ENCODE measurements at regions of chr3 and their contacts with region 1.

Region 1: GRCh38 chr3:111539351-111540331 is 2.4 kb upstream of the CD96 start:
- DNase-seq: peak; percentile 73
- H3K4me3 Mint-ChIP-seq: peak overlapping the region; percentile 53
- H3K27ac Mint-ChIP-seq: peak overlapping the region; percentile 79
- H3K4me1 Mint-ChIP-seq: peaks cover 63% of the 10 kb centered on the region
- H3K27me3 Mint-ChIP-seq: no peaks in the 10 kb centered on the region

Region 2: GRCh38 chr3:109731620-109732473 is 1807.8 kb before region 1 on chr3:
- CTCF ChIA-PET with region 1: no interaction called
- intact Hi-C with region 1: loop called (anchors 1 kb)
- DNase-seq: peak; percentile 77
- H3K4me3 Mint-ChIP-seq: no peak overlapping the region
- H3K27ac Mint-ChIP-seq: no peak overlapping the region
- H3K4me1 Mint-ChIP-seq: peaks cover 3% of the 10 kb centered on the region
- H3K27me3 Mint-ChIP-seq: no peaks in the 10 kb centered on the region

Region 3: GRCh38 chr3:111012388-111013248 is 527.0 kb before region 1 on chr3:
- CTCF ChIA-PET with region 1: no interaction called
- intact Hi-C with region 1: loop called (anchors 2 kb)
- DNase-seq: peak; percentile 27
- H3K4me3 Mint-ChIP-seq: no peak overlapping the region
- H3K27ac Mint-ChIP-seq: no peak overlapping the region
- H3K4me1 Mint-ChIP-seq: no peaks in the 10 kb centered on the region
- H3K27me3 Mint-ChIP-seq: peaks cover 2% of the 10 kb centered on the region

Region 4: DNA sequence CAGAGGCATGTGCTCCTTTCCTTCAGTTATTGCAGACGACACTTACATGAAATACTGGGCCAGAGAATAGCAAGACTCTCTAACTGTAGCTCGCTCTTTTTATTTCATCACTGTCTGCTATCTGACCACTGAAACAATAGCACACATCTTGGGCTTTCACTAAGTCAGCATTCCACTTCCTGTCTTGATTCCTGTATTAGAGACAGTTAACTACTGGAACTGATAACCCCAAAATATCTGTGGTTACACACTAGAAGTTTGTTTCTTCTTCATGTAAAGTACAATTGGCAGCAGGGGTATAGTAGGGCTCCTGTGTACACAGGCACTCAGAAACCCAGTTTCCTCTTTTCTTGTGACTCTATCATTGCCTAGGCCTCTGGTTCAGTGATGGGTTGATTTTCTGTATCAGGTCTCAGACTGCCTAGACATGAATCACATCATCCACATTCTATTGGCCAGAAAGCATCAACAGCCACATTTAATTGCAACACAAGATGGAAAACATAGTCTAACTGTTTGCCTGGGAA is 227.9 kb before region 1 on chr3:
- CTCF ChIA-PET with region 1: interaction called, 4 read pairs
- intact Hi-C with region 1: loop called (anchors 1 kb)
- DNase-seq: no peak
- H3K4me3 Mint-ChIP-seq: no peak overlapping the region
- H3K27ac Mint-ChIP-seq: peak overlapping the region; percentile 37
- H3K4me1 Mint-ChIP-seq: peaks cover 33% of the 10 kb centered on the region
- H3K27me3 Mint-ChIP-seq: no peaks in the 10 kb centered on the region

Region 5: DNA sequence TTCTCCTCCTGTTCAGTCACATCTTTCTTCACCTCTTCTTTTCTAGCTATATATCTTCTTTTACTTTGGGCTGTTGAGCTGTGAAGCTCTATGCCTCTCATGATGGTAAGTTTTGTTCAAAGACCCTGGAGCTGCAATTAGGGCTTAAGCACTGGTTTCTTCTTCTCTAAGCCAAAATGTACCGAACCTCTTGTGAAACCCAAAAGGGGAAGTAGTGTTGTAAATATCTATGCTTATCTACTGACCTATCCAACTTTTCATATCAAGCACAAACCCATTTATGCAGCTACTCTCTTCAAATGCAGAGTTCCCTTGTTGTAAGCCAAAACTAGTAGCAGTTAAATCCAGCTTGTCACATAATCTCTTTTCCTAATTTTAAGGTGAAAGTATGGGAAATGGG is 121.2 kb before region 1 on chr3:
- CTCF ChIA-PET with region 1: no interaction called
- intact Hi-C with region 1: no loop called
- DNase-seq: no peak
- H3K4me3 Mint-ChIP-seq: no peak overlapping the region
- H3K27ac Mint-ChIP-seq: no peak overlapping the region
- H3K4me1 Mint-ChIP-seq: no peaks in the 10 kb centered on the region
- H3K27me3 Mint-ChIP-seq: peaks cover 4% of the 10 kb centered on the region

Region 6: GRCh38 chr3:111594205-111594604 is 54.6 kb after region 1 on chr3:
- CTCF ChIA-PET with region 1: interaction called, 6 read pairs
- intact Hi-C with region 1: loop called (anchors 1 kb)
- DNase-seq: no peak
- H3K4me3 Mint-ChIP-seq: peak overlapping the region; percentile 94
- H3K27ac Mint-ChIP-seq: peak overlapping the region; percentile 98
- H3K4me1 Mint-ChIP-seq: peaks cover 52% of the 10 kb centered on the region
- H3K27me3 Mint-ChIP-seq: no peaks in the 10 kb centered on the region

Region 7: GRCh38 chr3:111761309-111761831 is 221.7 kb after region 1 on chr3:
- CTCF ChIA-PET with region 1: no interaction called
- intact Hi-C with region 1: loop called (anchors 1 kb)
- DNase-seq: peak; percentile 54
- H3K4me3 Mint-ChIP-seq: no peak overlapping the region
- H3K27ac Mint-ChIP-seq: peak overlapping the region; percentile 68
- H3K4me1 Mint-ChIP-seq: peaks cover 18% of the 10 kb centered on the region
- H3K27me3 Mint-ChIP-seq: no peaks in the 10 kb centered on the region